GM12878 (cell line): ENCODE measurements at regions of chr10 and their contacts with region 1.

Region 1: GRCh38 chr10:16777473-16778370 is 39.5 kb downstream of the RSU1 start:
- DNase-seq: no peak
- ATAC-seq: peak; percentile 77
- H3K4me3 ChIP-seq: no peak overlapping the region
- H3K27ac ChIP-seq: no peak overlapping the region
- H3K4me1 ChIP-seq: peaks cover 18% of the 10 kb centered on the region
- H3K27me3 ChIP-seq: no peaks in the 10 kb centered on the region
- CTCF ChIP-seq: peak; percentile 46 to 70 (median 62); a peak in 5 of 6 replicates
- EP300 ChIP-seq: no peak
- POLR2A ChIP-seq: no peak
- RAD21 ChIP-seq: peak; percentile 86

Region 2: DNA sequence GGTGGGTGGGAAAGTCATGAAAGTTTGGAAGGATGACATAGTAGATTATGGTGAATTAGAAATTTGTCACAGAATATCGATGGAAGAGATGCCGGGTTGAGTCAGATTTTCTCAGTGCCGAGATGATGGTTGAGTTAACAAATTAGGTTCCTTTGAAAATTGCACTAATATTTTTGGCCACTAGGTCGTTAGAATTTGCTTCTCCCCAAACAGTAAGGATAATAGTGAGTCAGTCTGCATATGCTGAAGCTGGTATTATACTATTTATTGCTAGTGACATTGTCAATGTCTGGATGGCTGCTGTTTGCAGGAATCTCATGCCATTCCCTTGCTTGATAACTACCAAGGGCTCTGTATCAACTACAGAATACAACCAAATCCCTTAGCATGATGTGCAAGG is 879.7 kb before region 1 on chr10:
- CTCF ChIA-PET with region 1: interaction called, 18 read pairs
- POLR2A ChIA-PET with region 1: no interaction called
- RAD21 ChIA-PET with region 1: interaction called, 10 read pairs
- SMC1A ChIA-PET with region 1: interaction called, 7 read pairs
- in situ Hi-C with region 1: no loop called
- intact Hi-C with region 1: loop called (anchors 5 kb)
- DNase-seq: no peak
- ATAC-seq: peak; percentile 51; the same call in 1 of the 3 replicates
- H3K4me3 ChIP-seq: no peak overlapping the region
- H3K27ac ChIP-seq: no peak overlapping the region
- H3K4me1 ChIP-seq: no peaks in the 10 kb centered on the region
- H3K27me3 ChIP-seq: no peaks in the 10 kb centered on the region
- CTCF ChIP-seq: peak; percentile 12 to 29 (median 26); a peak in 3 of 6 replicates
- EP300 ChIP-seq: no peak
- POLR2A ChIP-seq: no peak
- RAD21 ChIP-seq: no peak

Region 3: DNA sequence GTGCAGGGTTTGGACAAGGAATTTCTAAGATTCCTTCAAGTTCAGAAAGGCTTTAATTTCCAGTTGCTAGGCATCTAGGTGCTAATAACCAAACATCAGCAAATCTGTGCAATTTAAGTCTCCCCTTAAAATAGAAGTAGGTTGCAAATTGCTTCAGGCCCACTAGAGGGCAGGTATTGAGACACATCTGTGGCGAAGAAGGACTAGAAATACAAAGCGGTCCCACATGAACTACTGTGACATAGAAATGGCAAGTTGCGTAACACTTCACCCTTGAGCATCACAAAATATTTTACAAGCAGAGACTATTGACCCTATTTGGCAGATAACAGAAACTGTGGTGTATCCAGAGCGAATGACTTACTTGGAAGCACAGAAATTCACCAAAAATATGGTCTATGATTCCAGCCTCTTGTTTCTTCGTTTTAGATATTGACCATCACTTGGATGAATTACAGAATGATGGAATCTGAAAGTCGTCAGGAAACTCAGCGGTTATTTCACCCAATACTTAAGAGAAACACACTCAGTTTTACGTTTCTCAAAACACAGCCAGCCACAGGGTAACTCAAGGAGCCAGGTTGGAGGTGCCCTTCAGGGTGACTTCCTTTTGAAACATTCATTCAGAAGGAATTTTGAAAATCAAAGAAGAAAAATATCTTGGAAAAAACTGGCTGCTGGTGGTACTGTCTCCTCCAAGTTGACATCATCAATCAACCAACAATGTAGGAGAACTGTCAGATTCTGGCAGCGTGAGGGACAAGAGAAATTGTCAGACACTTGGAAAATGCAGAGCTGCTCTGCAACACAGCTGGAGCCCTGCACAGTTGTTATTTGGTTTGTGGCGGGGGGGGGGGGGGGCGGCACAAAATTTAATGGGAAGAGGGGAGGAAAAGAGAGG is 661.1 kb before region 1 on chr10:
- CTCF ChIA-PET with region 1: interaction called, 4 read pairs
- POLR2A ChIA-PET with region 1: no interaction called
- RAD21 ChIA-PET with region 1: interaction called, 3 read pairs
- SMC1A ChIA-PET with region 1: no interaction called
- in situ Hi-C with region 1: loop called (anchors 10 kb)
- intact Hi-C with region 1: loop called (anchors 1 kb)
- DNase-seq: peak; percentile 3
- ATAC-seq: peak; percentile 73
- H3K4me3 ChIP-seq: no peak overlapping the region
- H3K27ac ChIP-seq: no peak overlapping the region
- H3K4me1 ChIP-seq: no peaks in the 10 kb centered on the region
- H3K27me3 ChIP-seq: no peaks in the 10 kb centered on the region
- CTCF ChIP-seq: peak; percentile 60 to 70 (median 65)
- EP300 ChIP-seq: no peak
- POLR2A ChIP-seq: no peak
- RAD21 ChIP-seq: peak; percentile 72

Region 4: DNA sequence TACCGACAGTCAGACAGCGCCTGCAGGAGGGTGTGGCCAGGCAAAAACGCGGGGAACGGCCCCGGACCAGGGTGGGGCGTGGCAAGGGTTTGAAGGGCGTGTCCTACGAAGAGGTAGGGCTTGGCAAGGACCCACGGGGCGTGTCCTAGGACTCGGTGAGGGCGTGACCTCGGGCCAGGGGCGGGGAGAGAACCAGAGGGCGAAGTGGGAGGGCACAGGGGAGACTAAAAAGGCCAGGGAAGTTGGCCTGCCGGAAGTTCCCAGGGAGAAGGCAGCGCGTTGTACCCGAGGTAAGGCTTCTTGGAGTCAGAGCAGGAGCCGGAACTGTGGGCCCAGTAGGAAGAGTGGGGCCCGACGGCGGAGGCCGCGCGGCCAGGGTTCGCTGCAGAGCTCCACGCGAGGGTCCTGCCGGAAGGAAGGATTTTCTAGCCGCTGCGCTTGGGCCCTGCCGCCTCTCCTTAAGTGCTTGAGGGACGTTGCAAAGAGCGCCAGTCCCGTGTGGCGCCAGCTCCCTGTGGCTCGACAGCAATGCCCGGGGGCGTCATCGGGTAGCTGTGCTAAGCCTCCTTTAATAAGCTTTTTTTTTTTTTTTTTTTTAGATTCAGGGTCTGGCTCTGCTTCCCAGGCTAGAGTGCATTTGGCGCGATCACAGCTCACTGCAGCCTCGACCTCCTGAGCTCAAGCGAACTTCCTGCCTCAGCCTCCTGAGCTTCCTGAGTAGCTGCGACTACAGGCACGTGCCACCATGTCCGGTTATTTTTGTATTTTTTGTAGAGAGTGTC is 340.8 kb before region 1 on chr10 and contains the start of gene PTER:
- CTCF ChIA-PET with region 1: interaction called, 3 read pairs
- POLR2A ChIA-PET with region 1: interaction called, 4 read pairs
- RAD21 ChIA-PET with region 1: no interaction called
- SMC1A ChIA-PET with region 1: no interaction called
- in situ Hi-C with region 1: no loop called
- intact Hi-C with region 1: loop called (anchors 10 kb)
- DNase-seq: peak; percentile 89
- ATAC-seq: peak; percentile 97
- H3K4me3 ChIP-seq: peak within 1 kb of the TSS; percentile 80
- H3K27ac ChIP-seq: peak within 1 kb of the TSS; percentile 87
- H3K4me1 ChIP-seq: peaks cover 20% of the 10 kb centered on the region
- H3K27me3 ChIP-seq: no peaks in the 10 kb centered on the region
- CTCF ChIP-seq: no peak
- EP300 ChIP-seq: no peak
- POLR2A ChIP-seq: peak; percentile 86
- RAD21 ChIP-seq: no peak
- polyA plus RNA-seq, gene PTER: 18.4 to 29.4 TPM

Region 5: DNA sequence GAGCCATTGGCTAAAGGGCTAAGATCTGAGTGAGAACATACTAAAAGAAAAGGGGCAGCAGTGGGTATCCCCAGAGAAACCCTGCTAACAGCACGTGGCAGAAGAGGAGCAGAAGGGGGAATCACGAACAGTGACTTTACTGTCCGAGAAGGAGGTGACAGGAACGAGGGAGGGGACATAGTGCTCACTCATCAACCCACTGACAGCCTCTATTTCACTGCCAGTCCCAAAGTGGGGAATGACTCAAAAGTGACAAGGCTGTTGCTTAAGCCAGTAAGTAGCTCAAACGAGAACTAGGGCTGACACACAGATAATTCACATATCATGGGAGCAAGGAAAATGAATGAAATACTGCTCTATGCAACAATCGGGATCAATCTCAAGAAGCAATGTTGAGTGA is 53.2 kb before region 1 on chr10:
- CTCF ChIA-PET with region 1: no interaction called
- POLR2A ChIA-PET with region 1: no interaction called
- RAD21 ChIA-PET with region 1: no interaction called
- SMC1A ChIA-PET with region 1: no interaction called
- in situ Hi-C with region 1: no loop called
- intact Hi-C with region 1: no loop called
- DNase-seq: no peak
- ATAC-seq: no peak
- H3K4me3 ChIP-seq: no peak overlapping the region
- H3K27ac ChIP-seq: no peak overlapping the region
- H3K4me1 ChIP-seq: no peaks in the 10 kb centered on the region
- H3K27me3 ChIP-seq: no peaks in the 10 kb centered on the region
- CTCF ChIP-seq: no peak
- EP300 ChIP-seq: no peak
- POLR2A ChIP-seq: no peak
- RAD21 ChIP-seq: no peak

Region 6: DNA sequence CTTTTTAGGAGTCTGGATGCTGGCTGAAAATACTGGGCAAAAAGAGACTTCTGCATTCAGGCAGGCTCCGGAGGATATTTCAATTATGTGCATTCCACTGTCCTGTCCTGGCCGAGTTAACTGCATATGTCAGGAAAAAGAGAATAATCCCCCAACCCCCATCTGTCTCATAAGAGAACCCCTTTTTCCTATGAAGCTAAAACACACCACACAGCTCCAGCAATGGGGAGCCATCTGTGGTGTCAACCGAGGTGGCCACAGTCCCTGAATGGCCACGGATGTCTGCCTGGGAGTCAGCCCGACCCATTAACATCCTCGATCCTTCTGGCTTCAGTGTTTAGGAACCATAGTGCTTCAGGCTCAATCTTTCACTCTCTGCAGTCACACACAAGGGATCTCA is 30.9 kb before region 1 on chr10:
- CTCF ChIA-PET with region 1: no interaction called
- POLR2A ChIA-PET with region 1: no interaction called
- RAD21 ChIA-PET with region 1: no interaction called
- SMC1A ChIA-PET with region 1: no interaction called
- in situ Hi-C with region 1: no loop called
- intact Hi-C with region 1: no loop called
- DNase-seq: no peak
- ATAC-seq: no peak
- H3K4me3 ChIP-seq: no peak overlapping the region
- H3K27ac ChIP-seq: no peak overlapping the region
- H3K4me1 ChIP-seq: no peaks in the 10 kb centered on the region
- H3K27me3 ChIP-seq: no peaks in the 10 kb centered on the region
- CTCF ChIP-seq: no peak
- EP300 ChIP-seq: no peak
- POLR2A ChIP-seq: no peak
- RAD21 ChIP-seq: no peak

Region 7: DNA sequence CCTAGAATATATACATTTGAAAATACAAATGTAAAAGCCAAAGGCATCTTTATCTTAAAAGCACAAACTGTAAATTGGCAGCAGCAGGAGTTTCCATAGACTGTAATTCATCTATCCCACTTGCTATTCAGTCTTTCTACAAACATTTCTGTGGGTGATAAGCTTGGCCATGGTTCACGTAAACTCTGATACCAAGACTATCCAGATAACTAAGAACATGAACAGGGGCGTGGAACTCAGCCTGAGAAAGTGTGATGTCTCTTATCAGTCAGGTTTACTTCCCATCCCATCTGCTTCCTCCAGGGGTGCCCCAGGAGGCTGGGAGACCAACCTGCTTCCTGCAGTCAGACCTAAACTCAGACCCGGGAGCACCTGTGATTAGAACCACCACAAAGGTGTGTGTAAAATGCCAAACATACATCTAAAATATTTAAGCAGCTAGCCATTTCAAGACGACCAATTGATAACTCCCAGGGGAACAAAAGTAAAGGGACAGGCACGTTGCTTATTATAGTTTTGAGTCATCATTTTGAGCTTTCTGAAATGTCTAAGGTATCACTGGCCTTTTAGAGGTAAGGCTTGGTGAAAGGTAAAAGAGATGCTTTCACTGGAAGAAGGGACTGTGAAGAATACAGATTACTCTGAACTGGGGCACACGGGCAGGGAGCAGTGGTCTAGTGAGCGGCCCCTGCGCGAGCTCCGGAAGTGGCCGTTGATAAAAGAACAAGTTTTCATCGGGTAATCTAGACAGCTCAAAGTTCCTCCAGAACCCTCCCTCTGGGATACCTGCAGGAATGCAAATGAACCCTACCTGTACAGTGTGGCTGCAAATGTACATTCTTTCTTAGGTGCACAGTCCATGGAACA is 12.0 kb before region 1 on chr10:
- CTCF ChIA-PET with region 1: interaction called, 6 read pairs
- POLR2A ChIA-PET with region 1: no interaction called
- RAD21 ChIA-PET with region 1: interaction called, 5 read pairs
- SMC1A ChIA-PET with region 1: interaction called, 14 read pairs
- in situ Hi-C with region 1: no loop called
- intact Hi-C with region 1: no loop called
- DNase-seq: no peak
- ATAC-seq: peak; percentile 86
- H3K4me3 ChIP-seq: no peak overlapping the region
- H3K27ac ChIP-seq: no peak overlapping the region
- H3K4me1 ChIP-seq: peaks cover 10% of the 10 kb centered on the region
- H3K27me3 ChIP-seq: no peaks in the 10 kb centered on the region
- CTCF ChIP-seq: no peak
- EP300 ChIP-seq: no peak
- POLR2A ChIP-seq: no peak
- RAD21 ChIP-seq: no peak